Sigmoid colon (tissue), 7 donors: ENCODE measurements at regions of chr18 and their contacts with region 1.

Region 1: GRCh38 chr18:68714609-68715496 is at the start of gene TMX3:
- DNase-seq: peak; percentile 93
- H3K4me3 ChIP-seq: peak within 1 kb of the TSS; percentile 77 to 97 (median 90)
- H3K27ac ChIP-seq: peak within 1 kb of the TSS; percentile 77 to 84 (median 80)
- H3K4me1 ChIP-seq: peaks cover 0 to 23% (median 14%) of the 10 kb centered on the region in 4 donors
- H3K27me3 ChIP-seq: no peaks in the 10 kb centered on the region
- CTCF ChIP-seq: no peak
- EP300 ChIP-seq: no peak
- POLR2A ChIP-seq: peak in 1 of 2 donors; percentile 18
- total RNA-seq, gene TMX3: 40.9 to 59.5 (median 42.5) TPM

Region 2: DNA sequence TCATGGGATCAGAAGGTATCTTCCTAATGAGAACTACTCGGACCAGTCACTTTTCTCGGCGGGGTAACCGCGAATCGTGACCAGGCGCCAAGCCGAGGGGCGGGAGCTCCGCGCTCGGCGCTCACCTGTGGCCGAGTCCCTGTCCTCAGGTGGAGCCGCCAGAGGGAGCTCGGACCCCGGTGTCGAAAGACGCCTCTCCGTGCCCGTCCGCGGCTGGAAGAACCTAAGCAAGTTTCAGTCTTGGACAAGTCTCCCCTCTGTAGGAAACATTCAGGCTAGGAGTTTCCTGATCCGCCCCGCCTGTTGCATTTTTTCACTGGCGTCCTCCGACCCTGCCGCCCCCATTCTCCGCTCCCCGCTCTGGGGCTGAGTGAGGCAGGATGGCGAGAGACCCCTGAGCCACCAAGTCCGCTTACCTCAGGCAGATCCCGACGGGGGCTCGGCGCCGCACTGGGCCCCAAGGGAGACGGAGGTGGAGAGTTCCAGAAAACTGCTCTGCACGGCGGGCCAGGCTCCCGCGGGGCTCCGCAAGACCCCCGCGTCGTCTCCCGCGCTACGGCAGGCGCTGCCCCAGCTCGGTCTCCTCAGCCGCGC is 1198.8 kb before region 1 on chr18:
- intact Hi-C with region 1: loop called (anchors 5 kb)
- DNase-seq: peak; percentile 94
- H3K4me3 ChIP-seq: peak overlapping the region; percentile 63 to 81 (median 74)
- H3K27ac ChIP-seq: peak overlapping the region; percentile 81 to 93 (median 92)
- H3K4me1 ChIP-seq: peaks cover 0 to 47% (median 30%) of the 10 kb centered on the region in 4 donors
- H3K27me3 ChIP-seq: no peaks in the 10 kb centered on the region
- CTCF ChIP-seq: peak; percentile 51 to 76 (median 62)
- EP300 ChIP-seq: no peak
- POLR2A ChIP-seq: no peak

Region 3: DNA sequence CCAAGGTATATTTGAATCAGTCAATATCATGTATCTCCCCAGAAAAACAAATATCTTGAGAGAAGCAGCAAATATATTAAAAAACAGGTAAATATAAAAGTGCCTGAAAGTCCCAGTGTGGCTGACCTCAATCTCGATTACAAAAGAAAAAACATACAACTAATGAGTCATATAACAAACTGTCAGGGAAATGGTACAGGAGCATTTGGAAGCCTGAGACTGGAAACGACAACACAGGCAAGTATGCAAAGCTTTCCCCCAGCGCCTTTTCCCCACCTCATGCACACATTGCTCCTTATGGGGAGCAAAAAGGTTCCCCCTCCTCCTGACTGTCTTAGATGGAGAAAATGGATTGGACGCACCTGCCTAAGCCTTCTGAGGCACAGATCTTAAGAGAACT is 230.6 kb before region 1 on chr18:
- intact Hi-C with region 1: no loop called
- DNase-seq: no peak
- H3K4me3 ChIP-seq: no peak overlapping the region
- H3K27ac ChIP-seq: no peak overlapping the region
- H3K4me1 ChIP-seq: no peaks in the 10 kb centered on the region
- H3K27me3 ChIP-seq: no peaks in the 10 kb centered on the region
- CTCF ChIP-seq: no peak
- EP300 ChIP-seq: no peak
- POLR2A ChIP-seq: no peak

Region 4: GRCh38 chr18:68757126-68757525 is 42.3 kb after region 1 on chr18:
- intact Hi-C with region 1: no loop called
- DNase-seq: no peak
- H3K4me3 ChIP-seq: no peak overlapping the region
- H3K27ac ChIP-seq: no peak overlapping the region
- H3K4me1 ChIP-seq: no peaks in the 10 kb centered on the region
- H3K27me3 ChIP-seq: no peaks in the 10 kb centered on the region
- CTCF ChIP-seq: no peak
- EP300 ChIP-seq: no peak
- POLR2A ChIP-seq: no peak

Region 5: GRCh38 chr18:70205421-70206397 is 1490.9 kb after region 1 on chr18 and contains the start of gene RTTN:
- intact Hi-C with region 1: loop called (anchors 10 kb)
- DNase-seq: peak; percentile 95
- H3K4me3 ChIP-seq: peak within 1 kb of the TSS; percentile 67 to 81 (median 80)
- H3K27ac ChIP-seq: peak within 1 kb of the TSS; percentile 91 to 96 (median 94)
- H3K4me1 ChIP-seq: peaks cover 0 to 18% (median 5%) of the 10 kb centered on the region in 4 donors
- H3K27me3 ChIP-seq: no peaks in the 10 kb centered on the region
- CTCF ChIP-seq: no peak
- EP300 ChIP-seq: no peak
- POLR2A ChIP-seq: no peak
- total RNA-seq, gene RTTN: 11.3 to 18.2 (median 15.2) TPM